ENCODE measurements at regions of chr10 and their contacts with region 1.

Region 1: GRCh38 chr10:23530079-23530478 is 91.2 kb downstream of the OTUD1 start:
- DNase-seq: no peak
- ATAC-seq: no peak
- H3K4me3 ChIP-seq: no peak overlapping the region
- H3K27ac ChIP-seq: no peak overlapping the region
- H3K4me1 ChIP-seq: no peaks in the 10 kb centered on the region
- H3K27me3 ChIP-seq: no peaks in the 10 kb centered on the region
- CTCF ChIP-seq: peak in 3 of 4 donors; percentile 14 to 38 (median 15)

Region 2: DNA sequence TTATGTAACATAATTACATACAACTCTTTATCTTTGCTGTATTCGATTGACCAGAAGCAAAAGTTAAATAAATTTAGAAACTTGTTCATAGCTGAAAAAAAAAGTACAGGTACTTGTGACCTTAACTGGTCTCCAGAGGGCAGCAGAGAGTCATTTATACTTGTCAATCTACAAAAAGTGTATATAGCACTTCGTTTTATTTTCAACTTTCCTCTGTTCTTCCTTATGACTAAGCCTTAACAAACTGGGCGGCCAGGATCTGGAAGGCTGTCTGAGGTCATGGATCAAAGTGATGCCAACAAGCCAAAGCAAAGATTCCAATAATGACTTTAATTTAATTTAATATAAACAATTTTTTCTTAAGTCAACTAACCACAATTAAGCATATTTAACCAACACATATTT is 215.2 kb before region 1 on chr10:
- intact Hi-C with region 1: loop called in 1 of 3 experiments (anchors 10 kb)
- DNase-seq: peak in 3 of 6 donors; percentile 29 to 53 (median 52)
- ATAC-seq: peak; percentile 76 to 91 (median 86)
- H3K4me3 ChIP-seq: no peak overlapping the region
- H3K27ac ChIP-seq: no peak overlapping the region
- H3K4me1 ChIP-seq: no peaks in the 10 kb centered on the region
- H3K27me3 ChIP-seq: no peaks in the 10 kb centered on the region
- CTCF ChIP-seq: peak; percentile 31 to 63 (median 56)

Region 3: GRCh38 chr10:23694446-23694920 is 164.4 kb after region 1 on chr10:
- intact Hi-C with region 1: loop called in 1 of 3 experiments (anchors 10 kb)
- DNase-seq: peak in 1 of 6 donors; percentile 55
- ATAC-seq: peak in 3 of 4 donors; percentile 37 to 44 (median 38)
- H3K4me3 ChIP-seq: peak overlapping the region; percentile 1 to 38 (median 14)
- H3K27ac ChIP-seq: no peak overlapping the region
- H3K4me1 ChIP-seq: peaks cover 0 to 9% (median 9%) of the 10 kb centered on the region in 3 donors
- H3K27me3 ChIP-seq: peaks cover 0 to 35% (median 18%) of the 10 kb centered on the region in 4 donors
- CTCF ChIP-seq: no peak

Region 4: DNA sequence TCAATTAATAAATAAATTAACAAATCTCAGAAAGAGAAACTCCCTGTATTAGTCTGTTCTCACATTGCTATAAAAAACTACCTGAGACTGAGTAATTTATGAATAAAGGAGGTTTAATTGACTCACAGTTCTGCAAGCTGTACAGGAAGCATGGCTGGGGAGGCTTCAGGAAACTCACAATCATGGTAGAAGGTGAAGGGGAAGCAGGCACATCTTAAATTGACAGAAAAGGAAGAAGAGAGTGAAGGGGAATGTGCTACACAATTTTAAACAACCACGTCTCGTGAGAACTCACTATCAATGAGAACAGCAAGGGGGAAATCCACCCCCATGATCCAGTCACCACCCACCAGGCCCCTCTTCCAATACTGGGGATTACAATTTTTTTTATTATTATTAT is 320.6 kb after region 1 on chr10:
- intact Hi-C with region 1: no loop called
- DNase-seq: no peak
- ATAC-seq: no peak
- H3K4me3 ChIP-seq: no peak overlapping the region
- H3K27ac ChIP-seq: no peak overlapping the region
- H3K4me1 ChIP-seq: no peaks in the 10 kb centered on the region
- H3K27me3 ChIP-seq: no peaks in the 10 kb centered on the region
- CTCF ChIP-seq: no peak

Measured in pancreas (tissue), 10 donors.